Caco-2 (cell line): ENCODE measurements at regions of chr14 and their contacts with region 1.

Region 1: DNA sequence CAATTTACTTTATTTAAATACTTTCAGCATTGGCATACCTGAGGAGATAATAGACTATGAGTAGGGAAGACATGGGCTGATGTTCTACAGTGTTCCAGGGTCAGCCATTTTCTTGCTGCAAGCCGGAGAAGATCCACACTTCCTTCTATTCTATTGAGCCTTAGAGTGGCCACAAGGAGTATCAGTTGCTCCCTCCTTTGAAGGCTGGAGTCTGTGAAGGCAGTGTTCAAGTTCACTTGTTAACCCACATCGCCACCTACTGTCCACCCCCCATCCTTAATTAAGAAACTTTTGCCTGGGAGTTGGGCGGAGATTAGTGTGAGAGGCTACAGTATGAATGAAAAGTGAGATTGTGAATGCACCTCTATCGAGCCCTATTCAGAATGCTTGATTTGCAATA is 666.6 kb downstream of the NRXN3 start:
- DNase-seq: peak; percentile 69
- H3K4me3 ChIP-seq: no peak overlapping the region
- H3K4me3 Mint-ChIP-seq: no peak overlapping the region
- H3K27ac Mint-ChIP-seq: no peak overlapping the region
- H3K4me1 ChIP-seq: no peaks in the 10 kb centered on the region
- H3K4me1 Mint-ChIP-seq: no peaks in the 10 kb centered on the region
- H3K27me3 ChIP-seq: no peaks in the 10 kb centered on the region
- H3K27me3 Mint-ChIP-seq: peaks cover 17% of the 10 kb centered on the region
- CTCF ChIP-seq: peak; percentile 57

Region 2: DNA sequence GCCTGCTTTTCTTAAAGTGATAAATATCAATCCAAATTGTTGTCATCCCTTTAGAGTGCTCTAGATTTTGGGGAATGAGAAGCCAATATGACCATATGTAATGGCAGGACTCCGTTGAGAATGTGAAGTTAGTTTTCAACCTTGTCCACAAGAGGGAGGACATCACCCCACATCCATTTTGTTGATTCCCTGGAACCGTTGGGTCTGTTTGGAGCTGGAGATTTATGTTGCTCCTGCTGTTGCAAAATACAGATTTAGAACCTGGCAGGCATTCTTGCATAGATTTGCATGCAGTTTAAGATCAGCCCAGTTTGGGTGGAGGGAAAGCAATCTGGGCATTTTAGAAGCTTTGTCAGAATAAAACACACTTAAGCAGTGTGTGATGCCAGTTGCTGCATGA is 46.5 kb before region 1 on chr14:
- CTCF ChIA-PET with region 1: no interaction called
- POLR2A ChIA-PET with region 1: no interaction called
- intact Hi-C with region 1: loop called (anchors 1 kb)
- DNase-seq: no peak
- H3K4me3 ChIP-seq: no peak overlapping the region
- H3K4me3 Mint-ChIP-seq: no peak overlapping the region
- H3K27ac Mint-ChIP-seq: no peak overlapping the region
- H3K4me1 ChIP-seq: no peaks in the 10 kb centered on the region
- H3K4me1 Mint-ChIP-seq: no peaks in the 10 kb centered on the region
- H3K27me3 ChIP-seq: no peaks in the 10 kb centered on the region
- H3K27me3 Mint-ChIP-seq: peaks cover 9% of the 10 kb centered on the region
- CTCF ChIP-seq: peak; percentile 40 to 44